ENCODE measurements at regions of chr7 and their contacts with region 1.

Region 1: DNA sequence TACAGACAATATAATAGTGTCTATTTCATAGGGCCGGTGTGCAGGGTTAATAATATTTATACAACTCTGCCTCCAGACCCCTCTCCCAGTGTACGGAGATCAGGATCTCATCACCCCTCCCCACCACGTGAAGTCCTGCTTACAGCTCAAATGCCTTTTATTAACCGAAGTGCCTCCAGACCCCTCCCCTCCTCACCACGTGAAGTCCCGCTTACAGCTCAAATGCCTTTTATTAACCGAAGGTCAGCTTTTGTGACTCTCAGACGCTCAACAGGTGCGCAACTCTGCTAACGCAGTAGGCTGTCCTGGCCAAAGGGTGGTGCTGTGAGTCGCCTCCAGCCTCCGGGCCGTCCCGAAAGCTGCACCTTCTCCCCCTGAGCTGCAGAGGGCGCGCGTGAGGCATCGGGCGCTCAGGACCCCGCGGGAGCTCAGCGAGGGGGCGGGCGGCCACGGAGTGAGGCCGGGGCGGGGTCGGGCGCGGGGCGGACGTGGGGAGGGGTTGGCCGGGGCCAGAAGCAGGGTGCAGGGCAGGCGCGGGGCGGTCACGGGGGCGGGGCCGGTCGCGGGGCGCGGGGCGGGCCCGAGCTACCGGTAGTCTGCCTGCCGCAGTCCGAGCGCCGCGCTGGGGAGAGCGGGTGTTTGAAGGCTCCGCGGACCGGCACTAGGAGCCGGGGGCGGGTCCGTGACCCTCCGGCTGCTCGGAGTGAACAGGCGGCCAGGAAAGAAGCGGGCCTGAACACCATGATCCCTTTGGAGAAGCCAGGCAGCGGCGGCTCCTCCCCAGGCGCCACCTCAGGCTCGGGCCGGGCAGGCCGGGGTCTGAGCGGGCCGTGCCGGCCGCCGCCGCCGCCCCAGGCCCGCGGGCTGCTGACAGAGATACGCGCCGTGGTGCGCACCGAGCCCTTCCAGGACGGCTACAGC is at the start of gene STK17A:
- DNase-seq: peak; percentile 98
- ATAC-seq: peak; percentile 78
- H3K4me3 Mint-ChIP-seq: peak within 1 kb of the TSS; percentile 99
- H3K27ac Mint-ChIP-seq: peak within 1 kb of the TSS; percentile 99
- H3K4me1 Mint-ChIP-seq: peaks cover 26% of the 10 kb centered on the region
- H3K27me3 Mint-ChIP-seq: peaks cover 22% of the 10 kb centered on the region
- total RNA-seq, gene STK17A: 106 TPM

Region 2: GRCh38 chr7:43565786-43566185 is 17.0 kb before region 1 on chr7:
- POLR2A ChIA-PET with region 1: no interaction called
- DNase-seq: no peak
- ATAC-seq: no peak
- H3K4me3 Mint-ChIP-seq: no peak overlapping the region
- H3K27ac Mint-ChIP-seq: no peak overlapping the region
- H3K4me1 Mint-ChIP-seq: peaks cover 12% of the 10 kb centered on the region
- H3K27me3 Mint-ChIP-seq: peaks cover 32% of the 10 kb centered on the region

Region 3: DNA sequence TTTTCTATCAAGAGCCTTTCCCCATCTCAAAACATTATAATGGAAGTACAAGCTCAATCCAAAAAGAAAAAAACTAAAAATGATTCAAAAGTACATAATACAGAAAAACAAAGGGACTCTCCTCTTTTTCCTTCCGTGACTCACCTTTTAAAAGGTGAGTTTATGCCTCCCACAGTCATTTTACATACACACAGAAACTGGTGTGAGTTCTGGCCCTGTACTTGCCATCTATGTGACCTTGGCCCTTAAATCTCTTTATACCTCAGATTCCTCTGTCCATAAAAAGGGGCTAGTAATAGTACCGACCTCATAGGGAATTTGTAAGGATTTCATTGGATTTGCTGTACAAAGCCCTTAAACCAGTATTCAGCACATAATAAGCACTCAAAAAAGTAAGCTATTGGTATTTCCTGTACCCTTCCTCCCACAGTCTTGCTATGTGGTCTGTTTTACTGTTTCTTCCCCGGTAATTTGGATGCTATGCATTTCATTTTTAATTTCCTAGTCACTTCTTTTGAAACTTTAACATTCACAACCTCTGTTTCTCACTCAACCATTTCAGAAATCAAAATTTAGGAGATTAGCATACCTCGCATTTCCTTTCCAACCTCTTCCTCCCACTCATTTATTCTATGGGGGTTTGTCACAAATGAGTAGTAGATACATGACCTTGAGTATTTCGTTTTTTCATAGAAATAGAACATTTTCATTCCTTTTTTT is 39.1 kb after region 1 on chr7:
- POLR2A ChIA-PET with region 1: interaction called, 11 read pairs
- DNase-seq: no peak
- ATAC-seq: no peak
- H3K4me3 Mint-ChIP-seq: peak overlapping the region; percentile 63
- H3K27ac Mint-ChIP-seq: peak overlapping the region; percentile 66
- H3K4me1 Mint-ChIP-seq: peaks cover 43% of the 10 kb centered on the region
- H3K27me3 Mint-ChIP-seq: no peaks in the 10 kb centered on the region

Region 4: GRCh38 chr7:43679210-43680068 is 96.7 kb after region 1 on chr7:
- POLR2A ChIA-PET with region 1: interaction called, 16 read pairs
- DNase-seq: no peak
- ATAC-seq: peak; percentile 14
- H3K4me3 Mint-ChIP-seq: peak overlapping the region; percentile 28
- H3K27ac Mint-ChIP-seq: peak overlapping the region; percentile 11
- H3K4me1 Mint-ChIP-seq: peaks cover 33% of the 10 kb centered on the region
- H3K27me3 Mint-ChIP-seq: no peaks in the 10 kb centered on the region

Region 5: DNA sequence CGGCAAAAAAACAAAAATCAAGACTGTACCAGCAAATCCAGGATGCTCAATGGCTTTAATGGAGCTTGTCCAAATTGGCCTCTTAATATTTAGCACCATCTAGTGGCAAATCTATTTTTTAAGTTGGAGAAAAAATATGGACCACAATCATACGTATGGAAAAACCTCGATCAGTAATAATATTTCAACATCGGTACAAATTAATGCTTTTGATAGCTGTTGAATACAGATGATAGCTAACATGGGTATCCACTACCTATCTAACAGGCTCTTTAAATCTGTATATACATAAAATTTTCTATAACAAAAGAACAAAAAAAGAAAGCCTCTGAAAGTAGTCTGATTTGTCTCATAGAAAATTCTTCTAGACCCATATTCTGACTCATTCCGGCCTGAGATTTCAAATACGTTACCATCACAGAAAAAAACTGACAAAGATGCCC is 117.3 kb after region 1 on chr7:
- POLR2A ChIA-PET with region 1: interaction called, 143 read pairs
- DNase-seq: no peak
- ATAC-seq: peak; percentile 48
- H3K4me3 Mint-ChIP-seq: no peak overlapping the region
- H3K27ac Mint-ChIP-seq: no peak overlapping the region
- H3K4me1 Mint-ChIP-seq: peaks cover 49% of the 10 kb centered on the region
- H3K27me3 Mint-ChIP-seq: no peaks in the 10 kb centered on the region

Region 6: DNA sequence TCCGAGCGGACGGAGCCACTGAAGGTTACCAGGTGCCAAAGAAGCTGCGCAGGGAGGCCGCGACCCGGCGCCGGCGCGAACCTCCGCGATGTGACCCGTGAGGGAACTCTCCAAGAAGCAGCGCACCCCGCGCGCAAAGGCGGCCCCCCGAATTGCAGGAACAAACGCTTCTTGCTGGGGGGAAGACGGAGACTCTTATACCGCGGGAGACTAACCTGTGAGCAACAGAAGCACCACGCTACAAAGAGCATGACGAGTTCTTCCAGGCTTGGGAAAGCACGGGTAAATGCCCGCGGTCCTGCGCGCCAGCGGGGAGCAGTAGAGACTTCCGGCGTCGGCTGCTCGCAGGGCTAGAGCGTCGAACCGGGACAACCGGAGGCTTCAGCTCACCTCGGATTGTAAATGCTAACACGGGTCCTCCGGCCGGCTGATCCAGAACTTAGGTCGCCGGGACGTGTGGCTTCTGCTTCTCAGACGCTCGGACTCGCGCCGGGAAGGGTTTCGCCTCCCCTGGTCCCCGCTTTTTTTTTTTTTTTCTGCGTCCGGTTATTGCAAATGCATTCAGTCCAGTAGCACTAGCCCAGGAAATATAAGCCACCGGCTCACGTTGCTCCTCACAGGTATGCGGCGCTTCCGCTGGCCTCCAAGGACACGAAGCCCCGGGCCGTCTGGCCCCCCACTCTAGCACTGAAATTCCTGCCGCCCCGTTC is 146.6 kb after region 1 on chr7 and contains the start of gene COA1:
- POLR2A ChIA-PET with region 1: interaction called, 24 read pairs
- DNase-seq: peak; percentile 81
- ATAC-seq: peak; percentile 89
- H3K4me3 Mint-ChIP-seq: peak within 1 kb of the TSS; percentile 93
- H3K27ac Mint-ChIP-seq: peak within 1 kb of the TSS; percentile 85
- H3K4me1 Mint-ChIP-seq: peaks cover 23% of the 10 kb centered on the region
- H3K27me3 Mint-ChIP-seq: peaks cover 5% of the 10 kb centered on the region
- total RNA-seq, gene COA1: 72.7 to 80.2 TPM

Region 7: DNA sequence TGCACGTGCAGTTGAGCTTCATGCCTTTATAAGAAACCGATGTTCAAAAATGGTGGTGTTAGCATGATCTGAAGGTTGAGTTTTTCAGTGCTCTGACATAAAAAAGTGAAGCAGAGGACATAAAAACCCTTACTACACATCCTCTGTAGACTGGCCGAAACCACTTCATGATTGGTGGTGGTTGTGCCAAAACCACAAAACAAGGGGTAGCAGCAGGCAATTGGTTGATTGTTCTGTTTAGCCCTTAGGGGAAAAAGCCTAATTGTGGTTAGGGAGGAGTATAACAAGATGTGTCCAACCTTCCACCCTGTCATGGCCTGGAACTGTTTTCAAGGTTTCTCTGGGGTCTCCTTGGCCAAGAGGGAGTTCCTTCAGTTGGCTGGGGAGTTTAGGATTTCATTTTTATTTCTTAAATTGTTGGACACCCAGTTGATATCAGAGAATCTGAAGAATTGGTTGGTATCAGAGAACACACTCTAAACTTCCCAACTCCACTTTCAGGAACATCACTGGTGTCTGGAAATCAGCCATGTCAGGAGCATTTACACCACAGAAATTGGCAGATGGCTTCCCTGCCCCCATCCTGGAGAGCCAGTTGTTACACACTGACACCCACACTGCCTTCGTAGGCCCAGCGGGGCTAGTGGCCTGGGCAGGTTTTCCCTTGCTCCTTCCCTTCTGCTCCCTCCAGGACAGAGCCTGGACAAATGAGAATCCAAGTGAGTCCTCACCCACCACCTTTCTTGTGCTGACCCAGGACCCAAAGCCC is 267.8 kb after region 1 on chr7:
- POLR2A ChIA-PET with region 1: no interaction called
- DNase-seq: no peak
- ATAC-seq: no peak
- H3K4me3 Mint-ChIP-seq: no peak overlapping the region
- H3K27ac Mint-ChIP-seq: no peak overlapping the region
- H3K4me1 Mint-ChIP-seq: peaks cover 6% of the 10 kb centered on the region
- H3K27me3 Mint-ChIP-seq: peaks cover 17% of the 10 kb centered on the region